AG04450 (cell line): ENCODE measurements at regions of chr10 and their contacts with region 1.

Region 1: DNA sequence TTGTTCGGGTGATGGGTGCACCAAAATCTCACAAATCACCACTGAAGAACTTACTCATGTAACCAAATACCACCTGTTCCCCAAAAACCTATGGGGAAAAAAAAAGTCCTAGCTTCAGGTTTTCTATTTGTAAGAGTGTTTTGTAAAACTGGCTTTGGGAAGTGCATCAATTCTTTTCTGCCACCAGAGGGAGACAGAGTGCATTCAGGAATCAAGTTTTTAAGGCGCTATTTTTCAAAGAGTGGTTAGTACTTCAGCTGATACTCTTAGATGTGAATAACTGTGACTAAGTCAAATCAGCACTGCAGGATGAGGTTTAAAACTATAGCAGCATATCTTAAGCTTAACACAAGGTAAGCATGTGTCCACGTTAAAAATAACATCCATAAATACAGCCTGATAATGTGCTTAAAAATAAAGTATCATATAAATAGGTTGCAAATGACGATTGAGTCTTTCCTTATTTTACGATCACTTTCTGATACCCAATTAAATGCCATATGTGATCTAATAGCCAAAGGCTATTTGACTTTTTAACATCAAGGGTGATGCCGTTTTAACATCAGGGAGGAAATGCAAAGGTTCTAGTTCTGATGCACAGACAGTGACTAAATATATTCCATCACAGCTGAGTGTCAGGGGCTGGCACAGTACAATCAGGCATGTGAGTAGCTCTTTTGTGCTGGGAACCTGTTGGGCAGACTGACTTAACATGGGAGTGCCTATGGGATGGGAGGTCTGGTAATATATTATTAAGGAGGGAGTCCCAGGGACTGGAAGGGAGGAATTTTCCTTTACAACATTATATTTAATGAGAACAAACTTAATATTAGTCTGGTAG is 10.6 kb upstream of the LYZL2 start:
- DNase-seq: peak; percentile 42
- H3K4me3 ChIP-seq: no peak overlapping the region
- H3K27ac ChIP-seq: no peak overlapping the region
- H3K27me3 ChIP-seq: no peaks in the 10 kb centered on the region
- CTCF ChIP-seq: peak; percentile 89

Region 2: GRCh38 chr10:30392564-30392990 is 247.6 kb before region 1 on chr10:
- CTCF ChIA-PET with region 1: interaction called, 13 read pairs
- POLR2A ChIA-PET with region 1: no interaction called
- DNase-seq: peak; percentile 15
- H3K4me3 ChIP-seq: 0 out of 2 replicates have a peak overlapping the region, but pooled peaks have one; percentile 7
- H3K27ac ChIP-seq: no peak overlapping the region
- H3K27me3 ChIP-seq: peaks cover 24% of the 10 kb centered on the region
- CTCF ChIP-seq: peak; percentile 94

Region 3: DNA sequence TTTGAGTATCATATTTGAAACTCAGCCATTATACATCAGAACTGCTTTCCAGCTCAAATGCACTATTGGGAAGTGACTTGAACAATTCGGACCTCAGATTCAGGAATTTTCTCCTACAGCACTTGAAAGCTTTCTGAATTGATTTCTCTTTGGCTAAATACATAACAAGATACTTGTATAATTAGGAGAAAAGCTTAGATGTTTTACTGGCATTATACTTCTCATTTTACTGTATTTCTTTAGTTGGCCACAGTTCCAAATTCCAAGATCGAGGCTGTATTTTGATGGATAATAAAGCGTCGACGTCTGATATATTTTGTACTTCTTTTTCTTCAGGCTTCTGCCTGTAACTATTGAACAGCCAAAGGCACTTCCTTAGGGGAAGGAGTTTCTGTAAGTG is 16.1 kb after region 1 on chr10:
- CTCF ChIA-PET with region 1: interaction called, 20 read pairs
- POLR2A ChIA-PET with region 1: interaction called, 4 read pairs
- DNase-seq: no peak
- H3K4me3 ChIP-seq: no peak overlapping the region
- H3K27ac ChIP-seq: no peak overlapping the region
- H3K27me3 ChIP-seq: no peaks in the 10 kb centered on the region
- CTCF ChIP-seq: no peak

Region 4: DNA sequence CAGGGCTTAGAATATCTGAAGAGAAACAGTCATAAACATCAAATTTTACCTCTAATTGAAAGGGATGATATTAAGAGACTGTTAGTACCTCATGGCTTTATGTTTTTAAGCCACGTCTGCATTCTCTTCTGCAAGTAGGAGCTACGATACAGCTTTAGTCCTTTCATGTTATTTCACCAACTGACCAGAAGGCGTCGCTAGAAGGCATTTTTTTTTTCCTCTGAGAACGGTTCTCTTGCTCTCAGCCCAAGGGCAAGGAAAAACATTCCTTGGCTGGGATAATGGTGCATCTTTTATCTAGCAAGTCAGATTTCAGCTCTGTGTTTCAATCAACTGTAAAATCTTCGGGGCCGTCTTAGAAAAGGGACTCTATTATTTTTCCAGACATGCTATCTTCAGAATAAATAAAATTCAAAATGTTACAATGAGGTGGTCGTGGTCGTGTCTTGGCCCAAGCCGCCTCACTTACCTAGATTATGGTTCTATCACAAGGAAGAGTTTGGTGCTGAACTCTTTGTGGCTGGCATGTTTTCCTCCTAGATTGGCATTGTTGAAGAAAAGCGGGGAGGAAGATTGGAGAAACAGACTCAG is 31.0 kb after region 1 on chr10:
- CTCF ChIA-PET with region 1: interaction called, 29 read pairs
- POLR2A ChIA-PET with region 1: no interaction called
- DNase-seq: peak; percentile 75
- H3K4me3 ChIP-seq: peak overlapping the region; percentile 32; the same call in 1 of the 2 replicates
- H3K27ac ChIP-seq: no peak overlapping the region
- H3K27me3 ChIP-seq: no peaks in the 10 kb centered on the region
- CTCF ChIP-seq: peak; percentile 76